K562 (cell line): ENCODE measurements at regions of chr5 and their contacts with region 1.

Region 1: DNA sequence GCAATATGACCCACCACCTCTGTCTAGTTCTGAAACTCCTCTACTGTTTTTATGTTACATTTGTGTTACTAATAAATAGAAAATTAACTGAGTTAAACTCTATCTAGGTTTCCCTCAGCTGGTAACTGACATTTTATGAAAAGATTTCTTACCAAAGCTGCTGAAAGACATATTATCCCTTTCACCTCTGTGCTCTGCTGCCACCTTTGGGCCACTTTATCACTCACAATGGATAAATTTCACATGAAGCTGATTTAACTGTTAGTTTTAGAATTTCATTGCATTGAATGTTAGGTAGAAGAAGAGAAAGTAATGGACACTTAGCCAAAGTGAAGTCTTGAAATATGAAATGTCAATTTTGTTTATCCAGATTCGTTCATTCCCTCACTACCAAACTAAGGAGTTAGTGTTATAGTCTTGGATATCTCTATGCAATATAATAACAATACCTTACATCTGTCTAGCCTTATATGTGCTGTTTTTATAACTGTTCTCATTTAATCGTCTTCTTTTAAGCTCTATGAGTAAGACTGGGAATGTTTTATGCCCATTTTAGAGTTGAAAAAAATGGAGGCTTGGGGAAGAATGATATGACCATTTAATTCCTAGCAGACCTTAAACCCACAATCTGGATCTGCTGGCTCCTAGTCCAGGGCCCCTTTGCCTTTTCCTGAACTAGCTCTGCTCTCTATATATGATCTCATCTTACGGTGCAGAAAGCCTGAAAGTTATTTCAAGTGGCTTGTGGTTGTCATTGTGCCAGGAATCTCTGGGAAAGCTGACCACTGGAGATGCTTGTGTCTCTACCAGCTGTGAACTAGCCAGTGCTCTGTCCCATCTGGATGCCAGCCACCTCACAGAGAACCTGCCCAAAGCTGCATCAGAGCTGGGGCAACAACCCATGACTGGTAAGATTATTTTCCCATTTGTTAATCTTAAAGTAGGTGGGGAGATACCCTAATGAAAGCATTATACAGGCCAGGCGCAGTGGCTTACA is 97.1 kb downstream of the GOLPH3 start:
- DNase-seq: peak; percentile 42 to 64 (median 44)
- ATAC-seq: peak; percentile 74
- H3K4me3 ChIP-seq: no peak overlapping the region
- H3K27ac ChIP-seq: no peak overlapping the region
- H3K4me1 ChIP-seq: no peaks in the 10 kb centered on the region
- H3K27me3 ChIP-seq: peaks cover 3 to 32% of the 10 kb centered on the region in 2 experiments; a peak in 3 of 5 replicates
- CTCF ChIP-seq: peak; percentile 69 to 86 (median 72); a peak in 5 of 6 replicates
- EP300 ChIP-seq: no peak
- POLR2A ChIP-seq: no peak
- RAD21 ChIP-seq: peak; percentile 67 to 89

Region 2: GRCh38 chr5:31825518-31826068 is 251.4 kb before region 1 on chr5:
- CTCF ChIA-PET with region 1: no interaction called
- POLR2A ChIA-PET with region 1: no interaction called
- in situ Hi-C with region 1: no loop called
- intact Hi-C with region 1: loop called (anchors 1 kb)
- DNase-seq: peak in 3 of 4 experiments; percentile 22 to 63 (median 30)
- ATAC-seq: peak; percentile 94
- H3K4me3 ChIP-seq: no peak overlapping the region
- H3K27ac ChIP-seq: no peak overlapping the region
- H3K4me1 ChIP-seq: no peaks in the 10 kb centered on the region
- H3K27me3 ChIP-seq: no peaks in the 10 kb centered on the region; a peak in 1 of 5 replicates
- CTCF ChIP-seq: peak; percentile 51 to 81 (median 68); a peak in 5 of 6 replicates
- EP300 ChIP-seq: no peak
- POLR2A ChIP-seq: no peak
- RAD21 ChIP-seq: peak; percentile 32 to 78; a peak in 3 of 4 replicates

Region 3: GRCh38 chr5:31934156-31934555 is 142.8 kb before region 1 on chr5:
- CTCF ChIA-PET with region 1: no interaction called
- POLR2A ChIA-PET with region 1: interaction called, 3 read pairs
- in situ Hi-C with region 1: no loop called
- intact Hi-C with region 1: loop called (anchors 1 kb)
- DNase-seq: no peak
- ATAC-seq: no peak
- H3K4me3 ChIP-seq: no peak overlapping the region
- H3K27ac ChIP-seq: no peak overlapping the region
- H3K4me1 ChIP-seq: no peaks in the 10 kb centered on the region
- H3K27me3 ChIP-seq: peaks cover 13 to 42% of the 10 kb centered on the region in 2 experiments; a peak in 3 of 5 replicates
- CTCF ChIP-seq: no peak
- EP300 ChIP-seq: no peak
- POLR2A ChIP-seq: no peak
- RAD21 ChIP-seq: no peak